Activated CD4-positive, alpha-beta memory T cell treated with anti-CD3 and anti-CD28 coated beads for 36 hours (primary cell): ENCODE measurements at regions of chrX and their contacts with region 1.

Region 1: GRCh38 chrX:15674841-15675489 is 10.4 kb upstream of the CLTRN start:
- DNase-seq: peak; percentile 87
- H3K4me3 Mint-ChIP-seq: no peak overlapping the region
- H3K27ac Mint-ChIP-seq: no peak overlapping the region
- H3K4me1 Mint-ChIP-seq: peaks cover 22% of the 10 kb centered on the region
- H3K27me3 Mint-ChIP-seq: no peaks in the 10 kb centered on the region

Region 2: DNA sequence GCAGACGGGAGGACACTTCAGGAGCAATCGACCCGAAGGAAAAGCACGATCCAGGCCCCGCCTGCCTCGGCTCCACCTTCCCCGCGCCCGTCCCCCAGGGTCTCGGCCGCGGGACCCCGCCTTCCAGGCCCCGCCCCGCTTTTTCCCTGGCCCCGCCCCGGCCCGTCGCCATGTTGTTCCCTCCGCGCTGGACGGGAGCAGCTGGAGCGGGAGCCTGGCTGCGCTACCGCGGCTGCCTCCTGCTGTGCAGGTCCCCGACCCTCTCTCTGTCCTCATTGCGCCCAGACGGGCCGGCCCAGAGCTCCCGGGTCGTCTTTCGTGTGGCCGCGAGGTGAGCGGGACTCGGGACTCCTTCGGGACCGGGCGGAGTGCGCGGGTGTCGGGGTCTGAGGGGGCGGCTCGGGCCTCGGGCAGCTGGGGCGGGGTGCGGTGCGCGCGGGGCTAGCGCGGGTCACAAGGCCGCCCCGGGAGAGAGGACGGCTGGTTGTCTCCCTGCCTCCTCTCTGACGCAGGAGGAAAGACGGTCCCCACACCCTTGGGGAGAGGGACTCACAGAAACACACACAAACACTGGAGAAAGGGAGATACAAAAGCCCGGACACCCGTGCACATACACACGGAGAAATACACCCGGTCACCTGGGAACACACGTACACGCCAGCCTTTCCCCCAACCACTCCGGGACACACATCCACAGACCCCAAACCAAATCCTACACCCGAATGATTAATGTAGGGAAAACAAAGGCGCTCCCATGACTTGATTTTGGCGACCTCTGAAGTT is 1985.8 kb before region 1 on chrX and contains the start of gene RAB9A:
- CTCF ChIA-PET with region 1: no interaction called
- POLR2A ChIA-PET with region 1: no interaction called
- intact Hi-C with region 1: loop called (anchors 10 kb)
- DNase-seq: peak; percentile 88
- H3K4me3 Mint-ChIP-seq: peak within 1 kb of the TSS; percentile 87
- H3K27ac Mint-ChIP-seq: peak within 1 kb of the TSS; percentile 96
- H3K4me1 Mint-ChIP-seq: peaks cover 58% of the 10 kb centered on the region
- H3K27me3 Mint-ChIP-seq: no peaks in the 10 kb centered on the region
- total RNA-seq, gene RAB9A: 28.2 to 32.1 TPM

Region 3: GRCh38 chrX:15335135-15336022 is 339.6 kb before region 1 on chrX and contains the start of gene PIGA:
- CTCF ChIA-PET with region 1: no interaction called
- POLR2A ChIA-PET with region 1: no interaction called
- intact Hi-C with region 1: loop called (anchors 1 kb)
- DNase-seq: peak; percentile 94
- H3K4me3 Mint-ChIP-seq: peak within 1 kb of the TSS; percentile 90
- H3K27ac Mint-ChIP-seq: peak within 1 kb of the TSS; percentile 88
- H3K4me1 Mint-ChIP-seq: peaks cover 13% of the 10 kb centered on the region
- H3K27me3 Mint-ChIP-seq: peaks cover 2% of the 10 kb centered on the region
- total RNA-seq, gene PIGA: 31.1 to 36.7 TPM

Region 4: GRCh38 chrX:15737960-15738902 is 63.3 kb after region 1 on chrX and contains the start of gene CA5B:
- CTCF ChIA-PET with region 1: no interaction called
- POLR2A ChIA-PET with region 1: interaction called, 3 read pairs
- intact Hi-C with region 1: loop called (anchors 1 kb)
- DNase-seq: peak; percentile 97
- H3K4me3 Mint-ChIP-seq: peak within 1 kb of the TSS; percentile 87
- H3K27ac Mint-ChIP-seq: peak within 1 kb of the TSS; percentile 80
- H3K4me1 Mint-ChIP-seq: peaks cover 38% of the 10 kb centered on the region
- H3K27me3 Mint-ChIP-seq: no peaks in the 10 kb centered on the region
- total RNA-seq, gene CA5B: 13.1 to 15.5 TPM

Region 5: GRCh38 chrX:15789979-15790768 is 115.2 kb after region 1 on chrX and contains the start of gene ZRSR2:
- CTCF ChIA-PET with region 1: no interaction called
- POLR2A ChIA-PET with region 1: interaction called, 3 read pairs
- intact Hi-C with region 1: loop called (anchors 1 kb)
- DNase-seq: peak; percentile 91
- H3K4me3 Mint-ChIP-seq: no peak within 1 kb of the TSS
- H3K27ac Mint-ChIP-seq: no peak within 1 kb of the TSS
- H3K4me1 Mint-ChIP-seq: peaks cover 26% of the 10 kb centered on the region
- H3K27me3 Mint-ChIP-seq: no peaks in the 10 kb centered on the region
- total RNA-seq, gene ZRSR2: 16.2 to 17.3 TPM

Region 6: DNA sequence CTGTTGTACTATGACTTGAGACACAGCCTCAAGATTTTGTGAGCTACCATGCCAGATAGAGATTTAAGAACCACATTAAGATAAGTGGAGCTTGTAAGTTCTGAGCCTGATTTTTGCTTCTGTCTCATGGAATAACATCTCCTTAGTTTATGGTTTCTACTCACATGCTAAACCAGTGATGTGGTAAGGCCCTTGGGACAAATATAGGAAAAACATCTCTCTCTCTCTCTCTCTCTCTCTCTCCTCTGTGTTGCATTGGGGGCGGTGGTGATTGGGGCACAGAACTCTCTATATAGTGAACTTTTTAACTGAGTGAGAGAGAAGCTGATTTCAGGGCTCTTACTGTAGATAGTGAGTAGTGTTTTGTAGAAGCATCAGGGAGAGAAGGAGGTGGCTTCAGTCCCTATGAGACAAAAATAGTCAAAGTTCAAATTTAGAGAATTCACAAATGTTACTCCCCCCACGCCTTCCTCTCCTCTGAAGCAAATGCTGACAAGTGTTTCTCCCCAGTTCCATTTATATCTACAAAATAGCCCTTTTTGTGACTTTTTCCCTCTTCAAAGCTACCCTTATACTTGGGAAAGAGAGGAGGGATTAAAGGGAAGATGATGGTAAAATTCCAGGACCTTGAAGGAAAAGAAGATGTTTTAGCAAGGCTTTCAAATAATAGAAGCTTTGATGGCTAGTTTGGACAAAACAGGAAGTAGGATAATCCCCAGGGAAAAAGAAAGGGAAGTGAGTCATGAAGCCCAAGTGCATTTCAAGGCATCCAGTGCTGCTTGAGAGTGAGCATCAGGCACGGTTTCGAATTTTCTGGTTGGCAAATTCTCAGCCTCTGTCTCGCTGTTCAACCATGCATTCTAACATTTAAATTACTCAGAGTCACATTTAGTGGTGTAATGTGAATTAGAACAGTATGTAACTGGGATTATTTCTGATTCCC is 314.0 kb after region 1 on chrX:
- CTCF ChIA-PET with region 1: no interaction called
- POLR2A ChIA-PET with region 1: no interaction called
- intact Hi-C with region 1: loop called (anchors 5 kb)
- DNase-seq: no peak
- H3K4me3 Mint-ChIP-seq: no peak overlapping the region
- H3K27ac Mint-ChIP-seq: no peak overlapping the region
- H3K4me1 Mint-ChIP-seq: peaks cover 8% of the 10 kb centered on the region
- H3K27me3 Mint-ChIP-seq: peaks cover 2% of the 10 kb centered on the region

Region 7: GRCh38 chrX:16786139-16786790 is 1111.3 kb after region 1 on chrX and contains the start of gene TXLNG:
- CTCF ChIA-PET with region 1: no interaction called
- POLR2A ChIA-PET with region 1: no interaction called
- intact Hi-C with region 1: loop called (anchors 1 kb)
- DNase-seq: peak; percentile 96
- H3K4me3 Mint-ChIP-seq: peak within 1 kb of the TSS; percentile 86
- H3K27ac Mint-ChIP-seq: peak within 1 kb of the TSS; percentile 77
- H3K4me1 Mint-ChIP-seq: peaks cover 10% of the 10 kb centered on the region
- H3K27me3 Mint-ChIP-seq: no peaks in the 10 kb centered on the region
- total RNA-seq, gene TXLNG: 14.2 to 15.1 TPM